ENCODE measurements at regions of chr11 and their contacts with region 1.

Region 1: GRCh38 chr11:35617687-35618496 is at the start of gene FJX1:
- DNase-seq: peak; percentile 68 to 69
- H3K4me3 ChIP-seq: peak within 1 kb of the TSS; percentile 38 to 56
- H3K27ac ChIP-seq: peak within 1 kb of the TSS; percentile 82 to 92
- H3K4me1 ChIP-seq: no peaks in the 10 kb centered on the region
- H3K27me3 ChIP-seq: no peaks in the 10 kb centered on the region
- CTCF ChIP-seq: no peak
- POLR2A ChIP-seq: no peak
- total RNA-seq, gene FJX1: 2.1 to 48.5 (median 5.6) TPM

Region 2: DNA sequence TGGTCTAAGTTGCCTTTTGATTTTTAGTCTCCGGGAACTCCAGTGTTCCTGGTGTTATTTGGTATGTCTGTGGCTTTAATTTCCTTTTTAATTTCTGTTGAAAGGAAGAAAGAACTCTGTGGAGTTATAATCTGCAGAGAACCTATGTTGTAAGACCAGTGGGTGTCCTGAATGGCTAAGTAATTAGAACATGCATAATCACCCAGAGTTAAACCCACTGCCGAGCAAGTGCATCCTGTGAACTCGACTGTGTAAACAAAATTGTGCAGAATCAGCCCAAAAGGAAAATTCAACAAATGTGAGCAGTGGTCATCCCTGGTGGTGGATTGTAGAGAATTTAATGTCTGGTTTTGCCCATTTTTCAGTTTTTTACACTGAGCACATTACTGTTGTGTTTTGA is 508.8 kb after region 1 on chr11:
- intact Hi-C with region 1: loop called (anchors 5 kb)
- DNase-seq: no peak
- H3K4me3 ChIP-seq: no peak overlapping the region
- H3K27ac ChIP-seq: no peak overlapping the region
- H3K4me1 ChIP-seq: no peaks in the 10 kb centered on the region
- H3K27me3 ChIP-seq: no peaks in the 10 kb centered on the region
- CTCF ChIP-seq: no peak
- POLR2A ChIP-seq: no peak

Region 3: DNA sequence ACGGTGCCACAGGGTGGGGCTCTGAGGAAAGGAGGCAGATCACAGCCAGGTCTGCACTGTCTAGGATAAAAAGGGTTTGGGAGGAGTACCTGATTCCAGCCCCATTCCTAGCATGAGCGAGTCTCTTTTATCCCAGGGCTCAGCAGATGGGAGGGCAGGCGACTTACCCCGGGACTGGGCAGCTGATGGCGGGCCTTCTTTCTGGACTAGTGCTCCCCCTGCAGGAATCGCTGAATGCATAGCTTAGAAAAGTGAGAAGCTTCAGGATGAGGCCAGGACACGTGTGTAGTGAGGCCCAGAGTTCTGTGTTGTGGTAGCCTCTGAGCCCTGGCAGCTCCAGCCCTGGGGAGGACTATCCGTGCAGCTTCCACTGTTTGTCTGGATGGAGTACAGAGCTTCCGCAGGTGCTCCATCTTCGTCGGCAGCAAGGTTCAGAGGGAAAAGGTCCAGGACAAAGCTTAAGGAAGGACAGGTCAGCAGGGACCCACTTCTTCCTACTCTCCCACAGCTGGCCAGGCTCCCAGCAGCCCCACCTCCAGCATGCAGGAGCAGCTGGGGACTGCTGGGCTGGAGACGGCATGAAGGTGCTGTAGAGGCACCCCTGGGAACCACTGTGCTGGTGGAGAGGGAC is 641.0 kb after region 1 on chr11:
- intact Hi-C with region 1: loop called (anchors 5 kb)
- DNase-seq: peak; percentile 47 to 50
- H3K4me3 ChIP-seq: no peak overlapping the region
- H3K27ac ChIP-seq: no peak overlapping the region
- H3K4me1 ChIP-seq: no peaks in the 10 kb centered on the region
- H3K27me3 ChIP-seq: no peaks in the 10 kb centered on the region
- CTCF ChIP-seq: peak; percentile 40 to 61 (median 49)
- POLR2A ChIP-seq: no peak

Measured in uterus (tissue), 4 donors.